Natural killer cell (primary cell): ENCODE measurements at regions of chr1 and their contacts with region 1.

Region 1: GRCh38 chr1:226736908-226737818 is 1.9 kb downstream of the ITPKB start:
- DNase-seq: peak; percentile 59 to 73
- ATAC-seq: peak; percentile 67 to 82 (median 75)
- H3K4me3 ChIP-seq: peak overlapping the region; percentile 70
- H3K4me3 Mint-ChIP-seq: peak overlapping the region; percentile 99
- H3K27ac ChIP-seq: peak overlapping the region; percentile 63
- H3K27ac Mint-ChIP-seq: peak overlapping the region; percentile 89 to 93
- H3K4me1 ChIP-seq: peaks cover 52% of the 10 kb centered on the region
- H3K4me1 Mint-ChIP-seq: peaks cover 51 to 70% of the 10 kb centered on the region in 2 donors
- H3K27me3 ChIP-seq: no peaks in the 10 kb centered on the region
- H3K27me3 Mint-ChIP-seq: no peaks in the 10 kb centered on the region
- CTCF ChIP-seq: peak; percentile 32

Region 2: DNA sequence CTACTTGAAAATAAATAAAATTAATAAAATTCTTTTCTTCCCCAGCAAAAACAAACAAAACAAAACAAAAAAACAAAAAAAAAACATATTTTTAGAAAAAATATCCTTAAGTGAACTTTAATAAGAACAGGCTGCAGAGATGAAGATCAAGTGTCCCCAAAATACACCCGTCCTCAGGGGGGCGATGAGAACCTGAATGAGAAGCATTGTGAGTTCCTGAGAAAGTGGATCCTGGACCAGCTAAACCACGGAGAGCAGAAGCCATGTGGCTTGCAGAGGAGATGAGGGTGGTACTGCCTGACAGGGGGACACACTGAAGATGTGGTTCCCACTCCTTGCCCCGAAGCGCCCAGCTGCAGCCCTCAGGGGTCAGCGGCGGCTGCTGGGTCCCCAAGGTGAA is 87.4 kb before region 1 on chr1:
- intact Hi-C with region 1: loop called (anchors 2 kb)
- DNase-seq: peak in 1 of 2 donors; percentile 73
- ATAC-seq: no peak
- H3K4me3 ChIP-seq: no peak overlapping the region
- H3K4me3 Mint-ChIP-seq: no peak overlapping the region
- H3K27ac ChIP-seq: no peak overlapping the region
- H3K27ac Mint-ChIP-seq: no peak overlapping the region
- H3K4me1 ChIP-seq: peaks cover 30% of the 10 kb centered on the region
- H3K4me1 Mint-ChIP-seq: peaks cover 24 to 31% of the 10 kb centered on the region in 2 donors
- H3K27me3 ChIP-seq: no peaks in the 10 kb centered on the region
- H3K27me3 Mint-ChIP-seq: no peaks in the 10 kb centered on the region
- CTCF ChIP-seq: peak; percentile 17

Region 3: DNA sequence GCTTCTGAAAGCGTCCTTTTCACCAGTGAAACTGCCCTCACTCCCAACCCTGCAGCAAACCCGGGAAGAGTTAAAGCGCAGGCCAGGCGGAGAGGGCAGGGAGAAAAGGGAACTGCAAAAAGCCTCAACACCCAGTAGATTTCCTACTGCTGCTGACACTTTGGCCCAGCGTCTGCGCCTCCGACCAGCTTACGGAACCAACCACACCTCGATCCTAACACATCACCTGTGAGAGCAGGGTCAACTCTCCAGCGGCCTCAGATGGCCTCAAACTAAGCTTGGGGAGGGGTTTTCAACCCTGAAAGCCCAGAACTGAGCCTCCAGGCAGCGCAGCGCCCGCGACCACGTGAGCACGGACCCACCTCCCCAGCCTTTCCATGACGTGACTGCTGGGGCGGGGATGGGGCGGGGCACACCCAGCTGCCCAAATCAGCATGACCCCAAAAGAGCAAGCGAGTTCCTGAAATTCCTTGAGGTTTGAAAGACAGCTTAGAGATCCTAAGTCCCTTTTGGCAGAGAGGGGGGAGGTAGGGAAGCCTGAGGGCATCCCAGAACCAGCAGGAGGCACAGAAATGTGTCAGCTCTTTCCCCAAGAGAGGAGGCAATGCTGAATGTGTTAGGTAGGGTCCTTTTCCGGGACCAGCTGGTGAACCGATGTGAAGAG is 57.2 kb before region 1 on chr1:
- intact Hi-C with region 1: loop called (anchors 2 kb)
- DNase-seq: peak; percentile 69 to 86
- ATAC-seq: peak; percentile 11 to 52 (median 38)
- H3K4me3 ChIP-seq: peak overlapping the region; percentile 26
- H3K4me3 Mint-ChIP-seq: peak overlapping the region; percentile 91
- H3K27ac ChIP-seq: peak overlapping the region; percentile 94
- H3K27ac Mint-ChIP-seq: peak overlapping the region; percentile 97 to 99
- H3K4me1 ChIP-seq: peaks cover 96% of the 10 kb centered on the region
- H3K4me1 Mint-ChIP-seq: peaks cover 99 to 100% of the 10 kb centered on the region in 2 donors
- H3K27me3 ChIP-seq: no peaks in the 10 kb centered on the region
- H3K27me3 Mint-ChIP-seq: no peaks in the 10 kb centered on the region
- CTCF ChIP-seq: no peak

Region 4: DNA sequence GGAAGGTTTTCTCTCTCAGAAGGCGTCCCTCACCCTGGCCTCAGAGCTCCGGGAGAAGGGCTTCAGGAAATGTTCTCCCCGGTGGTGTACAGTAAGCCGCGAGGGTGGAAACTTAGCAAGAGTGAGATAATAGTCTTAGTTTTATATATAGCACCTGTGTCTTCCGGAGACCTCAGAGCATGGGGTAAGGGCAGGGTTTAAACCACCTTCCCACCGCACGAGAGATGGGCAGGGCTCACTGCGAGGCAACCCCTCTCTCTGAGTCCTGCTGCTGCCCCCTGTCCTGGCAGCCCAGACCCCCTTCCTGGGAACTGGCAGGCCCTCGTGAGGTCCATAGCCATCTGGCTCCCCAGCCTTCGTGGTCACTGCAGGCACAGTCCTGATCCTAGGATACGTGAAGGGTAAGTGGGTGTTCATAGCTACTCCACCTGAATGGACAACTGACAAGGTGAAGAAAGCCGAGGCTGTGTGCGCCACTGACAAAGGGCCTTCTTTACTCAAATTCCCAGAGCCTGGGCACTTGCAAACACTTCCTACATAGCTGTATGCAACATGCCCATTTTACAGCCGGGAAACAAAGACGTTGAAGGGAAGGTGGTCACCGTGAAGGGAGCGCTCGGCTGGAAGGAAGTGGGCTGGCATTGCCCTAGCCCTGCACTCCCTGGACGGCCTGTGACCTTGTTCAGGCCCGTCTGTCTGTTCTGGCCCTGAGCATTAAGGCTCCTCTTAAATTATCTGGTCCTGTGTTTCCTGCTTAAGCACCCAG is 25.0 kb before region 1 on chr1:
- intact Hi-C with region 1: loop called (anchors 2 kb)
- DNase-seq: peak; percentile 50 to 78
- ATAC-seq: peak; percentile 60 to 67 (median 67)
- H3K4me3 ChIP-seq: no peak overlapping the region
- H3K4me3 Mint-ChIP-seq: peak overlapping the region; percentile 77
- H3K27ac ChIP-seq: peak overlapping the region; percentile 64
- H3K27ac Mint-ChIP-seq: peak overlapping the region; percentile 78 to 91
- H3K4me1 ChIP-seq: peaks cover 66% of the 10 kb centered on the region
- H3K4me1 Mint-ChIP-seq: peaks cover 86 to 88% of the 10 kb centered on the region in 2 donors
- H3K27me3 ChIP-seq: no peaks in the 10 kb centered on the region
- H3K27me3 Mint-ChIP-seq: no peaks in the 10 kb centered on the region
- CTCF ChIP-seq: no peak

Region 5: GRCh38 chr1:226723657-226724532 is 13.3 kb before region 1 on chr1:
- intact Hi-C with region 1: no loop called
- DNase-seq: peak in 1 of 2 donors; percentile 32
- ATAC-seq: peak; percentile 47 to 50 (median 48)
- H3K4me3 ChIP-seq: no peak overlapping the region
- H3K4me3 Mint-ChIP-seq: peak overlapping the region; percentile 77
- H3K27ac ChIP-seq: peak overlapping the region; percentile 14
- H3K27ac Mint-ChIP-seq: peak overlapping the region; percentile 84 to 86
- H3K4me1 ChIP-seq: peaks cover 74% of the 10 kb centered on the region
- H3K4me1 Mint-ChIP-seq: peaks cover 77 to 86% of the 10 kb centered on the region in 2 donors
- H3K27me3 ChIP-seq: no peaks in the 10 kb centered on the region
- H3K27me3 Mint-ChIP-seq: no peaks in the 10 kb centered on the region
- CTCF ChIP-seq: no peak

Region 6: DNA sequence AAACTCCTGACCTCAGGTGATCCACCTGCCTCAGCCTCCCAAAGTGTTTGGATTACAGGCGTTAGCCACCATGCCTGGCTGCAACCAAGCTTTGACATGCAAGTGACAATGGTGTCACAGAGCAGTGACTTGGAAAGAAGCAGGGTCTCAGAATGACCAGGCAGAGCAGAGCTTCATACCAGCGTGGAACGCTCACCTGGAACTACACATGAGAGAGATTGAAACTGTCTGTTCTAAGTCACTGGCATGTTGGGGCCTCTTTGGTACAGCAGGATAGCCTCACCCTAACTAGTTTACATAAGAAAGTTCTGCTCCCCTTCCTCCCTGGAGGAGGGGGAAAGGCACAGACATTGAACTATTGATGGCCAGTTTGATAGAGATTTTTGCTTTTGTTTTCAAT is 49.4 kb after region 1 on chr1:
- intact Hi-C with region 1: no loop called
- DNase-seq: no peak
- ATAC-seq: no peak
- H3K4me3 ChIP-seq: no peak overlapping the region
- H3K4me3 Mint-ChIP-seq: no peak overlapping the region
- H3K27ac ChIP-seq: no peak overlapping the region
- H3K27ac Mint-ChIP-seq: no peak overlapping the region
- H3K4me1 ChIP-seq: no peaks in the 10 kb centered on the region
- H3K4me1 Mint-ChIP-seq: no peaks in the 10 kb centered on the region
- H3K27me3 ChIP-seq: no peaks in the 10 kb centered on the region
- H3K27me3 Mint-ChIP-seq: no peaks in the 10 kb centered on the region
- CTCF ChIP-seq: no peak

Region 7: DNA sequence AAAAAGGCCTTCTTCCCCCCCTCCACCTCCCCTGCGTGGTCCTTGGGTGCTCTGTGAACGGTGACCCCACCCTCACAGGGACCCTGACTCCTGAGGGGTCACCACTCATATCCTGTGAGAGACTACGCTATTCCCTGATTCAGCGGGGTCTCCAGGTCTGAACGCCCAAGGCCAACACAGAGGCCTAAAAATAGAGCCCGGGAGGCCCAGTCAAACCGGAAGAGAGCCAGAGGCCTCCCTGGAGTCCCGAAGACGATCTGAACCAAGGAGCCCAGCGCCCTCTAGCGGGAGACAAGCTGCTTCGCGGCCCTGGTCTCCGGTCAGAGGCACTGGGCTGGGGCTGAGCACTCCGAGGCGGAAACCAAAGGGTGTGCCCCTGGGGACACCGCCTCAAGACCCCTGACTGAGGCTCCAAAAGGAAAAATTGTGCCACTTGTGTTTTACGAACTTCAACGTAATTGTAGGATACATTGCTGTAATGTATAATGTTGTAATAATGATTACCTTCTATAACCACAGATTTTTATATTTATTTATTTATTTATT is 90.9 kb after region 1 on chr1:
- intact Hi-C with region 1: loop called (anchors 10 kb)
- DNase-seq: peak; percentile 92 to 97
- ATAC-seq: peak; percentile 98 to 100 (median 100)
- H3K4me3 ChIP-seq: no peak overlapping the region
- H3K4me3 Mint-ChIP-seq: peak overlapping the region; percentile 59
- H3K27ac ChIP-seq: peak overlapping the region; percentile 36
- H3K27ac Mint-ChIP-seq: peak overlapping the region; percentile 84
- H3K4me1 ChIP-seq: peaks cover 12% of the 10 kb centered on the region
- H3K4me1 Mint-ChIP-seq: peaks cover 8 to 14% of the 10 kb centered on the region in 2 donors
- H3K27me3 ChIP-seq: no peaks in the 10 kb centered on the region
- H3K27me3 Mint-ChIP-seq: no peaks in the 10 kb centered on the region
- CTCF ChIP-seq: peak; percentile 96